Common myeloid progenitor, CD34-positive (primary cell): ENCODE measurements at regions of chr12 and their contacts with region 1.

Region 1: DNA sequence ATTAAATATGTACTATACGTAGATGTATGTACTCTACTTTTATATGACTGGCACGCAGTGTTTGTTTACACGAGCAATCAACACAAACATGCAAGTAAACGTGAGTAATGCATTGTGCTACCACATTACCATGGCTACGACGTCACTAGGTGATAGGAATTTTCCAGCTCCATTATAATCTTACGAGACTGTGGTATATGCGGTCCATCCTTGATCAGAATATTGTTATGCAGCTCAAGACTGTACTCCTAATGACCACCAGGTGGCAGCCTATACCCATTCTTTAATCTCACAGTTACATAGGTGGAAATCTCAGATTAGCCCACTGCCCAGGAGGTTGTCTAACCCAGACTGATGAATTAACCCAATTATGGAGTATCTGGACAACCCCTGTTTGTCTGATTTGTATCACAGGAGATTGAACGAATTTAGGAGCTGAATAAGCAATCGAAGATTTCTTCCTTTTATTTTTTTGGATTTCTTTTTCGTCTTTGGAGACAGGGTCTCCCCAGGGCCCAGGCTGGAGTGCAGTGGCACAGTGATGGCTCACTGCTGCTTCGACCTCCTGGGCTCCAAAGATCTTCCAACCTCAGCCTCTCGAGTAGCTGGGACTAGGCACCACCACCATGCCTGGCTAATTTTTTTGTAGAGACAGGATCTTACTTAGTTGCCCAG is 8.7 kb upstream of the TESPA1 start:
- DNase-seq: peak; percentile 83 to 89 (median 85)
- H3K4me3 ChIP-seq: no peak overlapping the region
- H3K27ac ChIP-seq: no peak overlapping the region
- H3K4me1 ChIP-seq: peaks cover 17 to 52% (median 33%) of the 10 kb centered on the region in 4 experiments
- H3K27me3 ChIP-seq: no peaks in the 10 kb centered on the region

Region 2: DNA sequence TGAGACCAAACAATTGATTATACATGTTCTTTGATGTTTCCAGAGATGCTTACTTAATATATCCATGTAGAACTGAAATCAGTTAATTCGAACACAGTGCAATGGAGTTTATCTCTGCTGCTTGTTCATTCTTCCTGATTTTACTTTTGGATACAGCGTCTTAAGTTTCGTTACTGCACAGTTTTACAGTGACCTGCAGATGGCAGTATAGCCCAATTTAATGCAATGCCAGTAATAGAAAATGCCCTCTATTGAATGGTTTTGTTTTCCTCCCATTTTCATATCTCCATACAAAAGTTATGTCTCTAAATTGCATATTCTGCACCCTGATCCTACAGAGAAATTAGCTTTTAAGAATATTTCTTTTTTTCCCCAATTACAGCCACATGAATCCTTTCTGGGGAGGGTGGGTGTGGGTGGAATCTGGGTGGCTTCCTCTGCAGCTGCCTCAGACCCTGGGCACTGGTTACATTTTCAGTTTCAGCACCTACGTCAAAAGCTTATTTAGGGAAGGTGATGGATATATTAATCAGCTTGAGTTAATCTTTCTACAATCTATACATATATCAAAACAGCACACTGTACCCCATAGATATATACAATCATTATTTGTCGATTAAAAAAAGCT is 244.0 kb before region 1 on chr12:
- CTCF ChIA-PET with region 1: interaction called, 30 read pairs
- POLR2A ChIA-PET with region 1: no interaction called
- DNase-seq: peak; percentile 72 to 86 (median 80)
- H3K4me3 ChIP-seq: peak overlapping the region in 1 of 7 experiments; percentile 1
- H3K27ac ChIP-seq: no peak overlapping the region
- H3K4me1 ChIP-seq: peaks cover 6 to 12% (median 11%) of the 10 kb centered on the region in 4 experiments
- H3K27me3 ChIP-seq: no peaks in the 10 kb centered on the region

Region 3: DNA sequence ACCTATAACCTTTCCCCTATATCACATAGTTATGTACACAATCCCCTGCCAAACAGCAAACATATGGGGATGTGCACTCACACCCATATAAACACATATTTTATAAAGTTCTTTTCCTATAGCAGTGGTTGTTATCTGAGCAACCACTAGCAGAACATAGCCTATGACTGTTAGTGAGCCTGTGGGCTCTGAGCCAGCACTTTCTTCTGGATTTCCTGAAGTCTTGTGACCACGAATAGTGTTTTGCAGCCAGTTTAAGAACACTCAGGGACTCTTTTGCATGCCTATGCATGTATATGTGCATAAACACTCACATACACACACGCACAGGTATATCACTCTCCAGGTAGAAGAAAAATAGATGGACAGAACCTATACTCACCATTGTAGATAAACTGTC is 25.8 kb before region 1 on chr12:
- CTCF ChIA-PET with region 1: interaction called, 112 read pairs
- POLR2A ChIA-PET with region 1: no interaction called
- DNase-seq: peak; percentile 60 to 86 (median 82)
- H3K4me3 ChIP-seq: peak overlapping the region in 4 of 7 experiments; percentile 1 to 66 (median 20)
- H3K27ac ChIP-seq: peak overlapping the region; percentile 41 to 77
- H3K4me1 ChIP-seq: peaks cover 19 to 60% (median 30%) of the 10 kb centered on the region in 4 experiments
- H3K27me3 ChIP-seq: no peaks in the 10 kb centered on the region

Region 4: GRCh38 chr12:55034218-55034617 is 40.9 kb after region 1 on chr12:
- CTCF ChIA-PET with region 1: interaction called, 11 read pairs
- POLR2A ChIA-PET with region 1: no interaction called
- DNase-seq: no peak
- H3K4me3 ChIP-seq: no peak overlapping the region
- H3K27ac ChIP-seq: no peak overlapping the region
- H3K4me1 ChIP-seq: peaks cover 6 to 25% (median 13%) of the 10 kb centered on the region in 4 experiments
- H3K27me3 ChIP-seq: no peaks in the 10 kb centered on the region